Mammary epithelial cell (primary cell): ENCODE measurements at regions of chr17 and their contacts with region 1.

Region 1: DNA sequence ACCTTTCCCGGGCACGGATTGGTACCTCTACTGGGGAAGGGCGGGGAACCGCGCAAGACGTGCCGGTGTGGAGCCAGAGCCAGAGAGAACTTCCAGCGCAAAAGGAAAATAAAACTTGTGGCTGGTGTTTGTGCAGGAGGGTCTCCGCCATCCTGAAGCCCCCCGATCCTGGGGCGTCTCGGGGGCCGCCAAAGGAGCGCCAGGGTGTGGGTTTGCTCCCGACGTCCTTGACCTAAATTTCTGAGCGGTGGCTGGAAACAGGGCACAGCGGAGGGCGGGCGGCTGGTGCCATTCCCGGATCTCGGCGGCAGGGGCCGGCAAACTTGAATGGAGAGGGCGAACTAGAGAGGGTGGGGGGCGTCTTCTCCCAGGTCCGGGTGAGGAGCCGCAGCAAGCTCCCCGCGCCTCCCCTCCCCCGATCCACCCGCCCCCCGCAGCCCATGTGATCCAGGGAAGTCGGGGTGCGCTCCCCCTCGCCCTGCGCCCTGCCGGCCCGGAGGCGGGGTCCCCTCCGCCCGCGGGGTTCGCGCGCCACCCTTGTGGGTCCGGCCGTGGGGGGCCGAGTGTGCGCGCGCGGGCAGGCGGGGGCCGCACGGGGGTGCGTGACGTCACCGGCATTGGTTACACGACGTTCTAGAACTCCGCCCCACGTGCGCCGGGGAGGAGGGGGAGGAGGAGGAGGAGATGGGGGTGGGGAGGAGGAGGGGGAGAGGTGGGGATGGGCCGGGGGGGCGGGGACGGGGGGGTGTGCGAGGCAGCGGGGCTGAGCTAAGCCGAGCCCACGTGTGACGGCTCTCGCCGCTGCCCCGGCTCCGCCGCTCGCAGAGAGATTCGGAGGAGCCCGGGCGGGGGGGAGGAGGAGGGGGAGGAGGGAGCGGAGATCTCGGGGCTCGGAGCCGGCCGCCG is at the start of gene MSI2:
- DNase-seq: peak; percentile 76
- H3K4me3 ChIP-seq: peak within 1 kb of the TSS; percentile 65 to 99 (median 68)
- H3K27ac ChIP-seq: peak within 1 kb of the TSS; percentile 61
- H3K4me1 ChIP-seq: peaks cover 18% of the 10 kb centered on the region
- H3K27me3 ChIP-seq: no peaks in the 10 kb centered on the region
- CTCF ChIP-seq: no peak
- total RNA-seq, gene MSI2: 56.5 to 57.0 TPM

Region 2: GRCh38 chr17:56891784-56892183 is 364.2 kb before region 1 on chr17:
- CTCF ChIA-PET with region 1: no interaction called
- dilution Hi-C with region 1: no loop called
- in situ Hi-C with region 1: no loop called
- intact Hi-C with region 1: no loop called
- DNase-seq: no peak
- H3K4me3 ChIP-seq: no peak overlapping the region
- H3K27ac ChIP-seq: no peak overlapping the region
- H3K4me1 ChIP-seq: no peaks in the 10 kb centered on the region
- H3K27me3 ChIP-seq: no peaks in the 10 kb centered on the region
- CTCF ChIP-seq: peak; percentile 14 to 32

Region 3: DNA sequence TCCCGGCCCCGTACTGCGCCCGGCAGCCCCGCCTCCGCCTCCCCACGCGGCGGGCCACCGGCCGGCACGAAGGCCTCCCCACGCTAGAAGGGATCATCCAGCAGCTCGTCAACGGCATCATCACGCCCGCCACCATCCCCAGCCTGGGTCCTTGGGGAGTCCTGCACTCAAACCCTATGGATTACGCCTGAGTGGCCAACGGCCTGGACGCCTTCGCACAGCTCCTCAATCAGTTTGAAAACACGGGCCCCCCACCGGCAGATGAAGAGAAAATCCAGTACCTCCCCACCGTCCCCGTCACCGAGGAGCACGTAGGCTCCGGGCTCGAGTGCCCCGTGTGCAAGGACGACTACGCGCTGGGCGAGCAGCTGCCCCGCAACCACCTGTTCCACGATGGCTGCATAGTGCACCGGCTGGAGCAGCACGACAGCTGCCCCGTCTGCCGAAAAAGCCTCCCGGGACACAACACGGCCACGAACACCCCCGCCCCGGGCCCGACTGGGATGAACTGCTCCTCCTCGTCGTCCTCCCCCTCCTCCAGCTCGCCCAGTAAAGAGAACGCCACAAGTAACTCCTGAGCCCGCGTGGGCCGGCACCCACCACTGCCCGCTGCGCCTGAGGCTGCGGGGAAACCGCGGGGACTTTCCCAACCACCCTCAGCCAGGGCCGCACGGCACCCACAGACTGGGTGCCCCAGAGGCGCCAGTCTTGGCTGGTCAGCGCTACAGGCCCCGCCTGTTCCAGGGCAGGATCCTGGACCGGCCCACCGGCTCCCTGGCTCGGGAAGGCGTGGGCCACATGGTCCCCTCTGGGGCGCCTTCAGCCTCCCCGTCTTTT is 209.9 kb before region 1 on chr17:
- CTCF ChIA-PET with region 1: no interaction called
- dilution Hi-C with region 1: no loop called
- in situ Hi-C with region 1: no loop called
- intact Hi-C with region 1: no loop called
- DNase-seq: peak; percentile 30
- H3K4me3 ChIP-seq: no peak overlapping the region
- H3K27ac ChIP-seq: no peak overlapping the region
- H3K4me1 ChIP-seq: peaks cover 4% of the 10 kb centered on the region
- H3K27me3 ChIP-seq: no peaks in the 10 kb centered on the region
- CTCF ChIP-seq: no peak

Region 4: DNA sequence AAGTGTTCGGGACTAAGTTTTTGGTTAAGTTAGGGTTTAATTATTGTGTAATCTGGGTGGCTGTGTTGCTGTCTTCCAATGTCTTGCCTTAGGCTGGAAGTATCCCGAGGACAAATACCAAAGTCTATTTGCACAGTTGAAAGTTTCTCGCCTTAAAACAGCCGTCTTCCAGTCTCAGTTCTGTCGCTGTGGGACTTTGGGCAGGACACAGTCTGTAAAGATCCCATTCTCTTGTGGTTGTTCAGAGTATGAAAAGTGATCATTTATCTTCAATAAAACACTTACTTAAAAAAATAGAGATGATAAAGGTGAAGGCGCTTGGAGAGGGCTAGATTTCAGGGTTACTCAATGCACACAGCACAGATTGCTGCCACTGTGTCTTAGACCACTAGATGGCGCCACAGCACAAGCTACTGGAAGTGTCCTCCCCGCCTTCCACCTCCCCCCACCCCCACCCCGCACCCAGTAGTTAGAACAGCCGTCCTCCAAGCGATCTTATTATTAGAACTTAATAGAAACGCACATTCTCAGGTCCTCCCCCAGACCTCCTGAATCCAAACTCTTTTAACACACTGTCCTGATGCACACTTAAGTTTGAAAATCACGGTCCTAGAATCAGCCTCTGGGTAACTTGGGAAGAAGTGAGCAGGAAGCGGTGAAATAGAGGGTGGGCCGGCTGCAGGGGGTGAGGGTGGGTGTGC is 125.1 kb before region 1 on chr17:
- CTCF ChIA-PET with region 1: no interaction called
- dilution Hi-C with region 1: no loop called
- in situ Hi-C with region 1: no loop called
- intact Hi-C with region 1: no loop called
- DNase-seq: peak; percentile 57
- H3K4me3 ChIP-seq: peak overlapping the region in 1 of 3 experiments; percentile 37
- H3K27ac ChIP-seq: no peak overlapping the region
- H3K4me1 ChIP-seq: peaks cover 4% of the 10 kb centered on the region
- H3K27me3 ChIP-seq: no peaks in the 10 kb centered on the region
- CTCF ChIP-seq: peak; percentile 77 to 83

Region 5: GRCh38 chr17:57293077-57293476 is 37.0 kb after region 1 on chr17:
- CTCF ChIA-PET with region 1: no interaction called
- dilution Hi-C with region 1: no loop called
- in situ Hi-C with region 1: no loop called
- intact Hi-C with region 1: loop called (anchors 2 kb)
- DNase-seq: peak; percentile 92
- H3K4me3 ChIP-seq: no peak overlapping the region
- H3K27ac ChIP-seq: peak overlapping the region; percentile 23
- H3K4me1 ChIP-seq: peaks cover 36% of the 10 kb centered on the region
- H3K27me3 ChIP-seq: no peaks in the 10 kb centered on the region
- CTCF ChIP-seq: no peak

Region 6: DNA sequence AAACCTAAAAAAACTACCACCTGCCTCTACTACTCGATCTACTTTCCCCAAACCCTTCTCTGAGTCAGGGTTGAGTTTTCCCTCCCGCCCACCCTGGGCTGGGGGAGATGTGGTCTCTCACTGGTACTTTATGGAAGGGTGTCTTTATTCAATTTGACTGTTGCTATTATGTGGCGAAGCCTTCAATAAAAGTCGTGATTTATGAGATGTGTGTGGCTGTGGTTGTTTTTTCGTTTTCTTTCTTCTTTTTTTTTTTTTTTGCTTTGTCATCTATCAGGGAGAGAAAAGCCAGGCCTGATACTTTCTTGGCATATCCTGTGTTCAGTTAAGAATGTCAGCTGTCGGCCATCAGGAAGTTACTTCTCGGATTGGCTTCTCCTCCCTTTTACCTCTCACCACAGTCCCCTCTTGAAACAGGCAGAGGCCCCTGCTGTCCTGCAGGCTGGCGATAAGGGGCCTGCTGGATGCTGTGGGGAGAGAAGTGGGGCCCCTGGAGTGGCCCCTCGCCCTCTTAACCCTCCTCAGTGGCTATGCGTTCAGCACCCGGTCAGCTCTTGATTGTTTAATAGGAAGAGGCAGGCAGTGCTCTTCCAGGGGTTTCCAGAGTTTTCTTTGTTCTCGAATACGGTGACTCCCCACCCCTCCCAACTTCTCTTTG is 123.3 kb after region 1 on chr17:
- CTCF ChIA-PET with region 1: no interaction called
- dilution Hi-C with region 1: no loop called
- in situ Hi-C with region 1: no loop called
- intact Hi-C with region 1: loop called (anchors 5 kb)
- DNase-seq: no peak
- H3K4me3 ChIP-seq: no peak overlapping the region
- H3K27ac ChIP-seq: no peak overlapping the region
- H3K4me1 ChIP-seq: peaks cover 22% of the 10 kb centered on the region
- H3K27me3 ChIP-seq: no peaks in the 10 kb centered on the region
- CTCF ChIP-seq: no peak

Region 7: DNA sequence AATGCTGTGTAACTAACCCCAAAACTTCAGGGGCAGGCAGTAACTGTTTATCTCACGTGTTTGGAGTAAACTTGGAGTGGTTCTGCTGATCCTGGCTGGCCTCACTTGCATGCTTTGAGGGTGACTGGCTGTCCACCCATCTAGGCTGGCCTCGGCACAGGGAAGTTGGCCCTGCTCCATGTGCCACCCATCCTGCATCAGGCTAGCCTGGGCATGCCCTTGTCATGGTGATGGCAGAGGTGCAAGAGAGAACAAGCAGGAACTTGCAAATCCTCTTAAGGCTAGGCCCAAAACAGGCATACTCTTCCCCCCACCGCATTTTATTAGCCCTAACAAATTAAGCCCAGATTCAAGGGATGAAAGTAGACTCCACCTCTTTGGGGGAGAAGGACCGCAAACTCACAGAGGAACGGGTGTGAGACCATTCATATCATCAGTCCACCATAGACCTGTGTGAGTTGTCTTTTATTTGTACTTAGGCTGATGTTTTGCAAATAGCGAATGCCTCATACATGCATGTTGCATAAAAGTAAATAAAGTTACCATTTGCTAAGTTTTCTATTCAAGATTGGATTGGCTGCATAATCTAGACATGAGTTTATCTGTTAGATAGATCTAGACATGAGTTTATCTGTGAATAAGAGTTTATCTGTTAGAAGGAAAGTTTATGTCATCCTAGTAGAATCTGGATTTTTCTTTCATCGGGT is 268.1 kb after region 1 on chr17:
- CTCF ChIA-PET with region 1: no interaction called
- dilution Hi-C with region 1: no loop called
- in situ Hi-C with region 1: loop called in 1 of 2 experiments (anchors 25 kb)
- intact Hi-C with region 1: loop called (anchors 10 kb)
- DNase-seq: peak; percentile 96
- H3K4me3 ChIP-seq: no peak overlapping the region
- H3K27ac ChIP-seq: peak overlapping the region; percentile 72
- H3K4me1 ChIP-seq: peaks cover 25% of the 10 kb centered on the region
- H3K27me3 ChIP-seq: no peaks in the 10 kb centered on the region
- CTCF ChIP-seq: no peak

Region 8: GRCh38 chr17:57557834-57558681 is 302.0 kb after region 1 on chr17:
- CTCF ChIA-PET with region 1: interaction called, 3 read pairs
- dilution Hi-C with region 1: no loop called
- in situ Hi-C with region 1: no loop called
- intact Hi-C with region 1: loop called (anchors 1 kb)
- DNase-seq: peak; percentile 74
- H3K4me3 ChIP-seq: no peak overlapping the region
- H3K27ac ChIP-seq: no peak overlapping the region
- H3K4me1 ChIP-seq: peaks cover 12% of the 10 kb centered on the region
- H3K27me3 ChIP-seq: no peaks in the 10 kb centered on the region
- CTCF ChIP-seq: no peak

Region 9: DNA sequence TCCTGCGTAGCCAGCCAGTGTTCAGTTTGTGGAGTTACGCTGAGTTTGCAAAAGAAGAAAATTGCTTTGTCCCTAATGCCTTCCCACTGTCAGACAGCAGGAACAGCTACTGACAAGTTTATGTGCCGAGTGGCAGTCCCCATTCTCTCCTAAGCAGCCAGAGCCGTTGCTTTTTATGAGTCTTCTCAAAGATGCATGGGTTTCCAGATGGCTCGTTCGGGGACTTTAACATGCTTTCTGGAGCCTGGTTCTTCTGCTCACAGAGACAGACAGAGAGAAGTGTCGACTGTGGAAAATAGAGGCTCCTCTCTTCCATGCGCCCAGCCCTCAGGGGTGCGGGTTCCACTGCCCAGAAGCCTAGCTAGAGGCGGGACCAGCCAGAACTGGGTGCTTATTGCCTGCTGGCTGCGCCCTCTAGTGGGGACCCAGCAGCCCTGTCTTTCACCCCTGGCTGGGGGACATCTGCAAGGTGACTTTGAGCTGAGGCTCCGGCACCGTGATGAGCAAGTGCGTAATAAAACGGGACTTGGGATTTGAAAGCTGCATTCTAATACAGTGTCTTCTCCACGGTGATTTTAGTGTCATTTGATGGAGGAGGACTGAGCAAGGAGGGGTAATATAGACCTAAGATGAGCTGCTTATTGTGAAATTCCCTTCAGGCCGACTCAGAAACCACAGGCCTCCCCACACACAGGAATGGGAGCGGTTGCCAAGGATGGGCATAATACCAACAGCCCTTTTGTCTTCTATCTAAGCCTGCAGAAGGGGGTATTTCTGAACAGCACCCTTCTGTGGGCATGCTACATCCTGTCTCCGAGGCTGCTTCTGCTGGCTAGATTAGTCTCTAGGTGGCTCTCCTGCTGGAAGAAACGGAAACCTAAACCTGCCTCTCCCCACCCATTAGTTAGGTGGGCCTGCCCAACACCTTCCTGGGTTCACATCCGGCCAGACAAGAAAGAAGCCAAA is 415.9 kb after region 1 on chr17:
- CTCF ChIA-PET with region 1: interaction called, 3 read pairs
- dilution Hi-C with region 1: no loop called
- in situ Hi-C with region 1: no loop called
- intact Hi-C with region 1: loop called (anchors 5 kb)
- DNase-seq: peak; percentile 93
- H3K4me3 ChIP-seq: no peak overlapping the region
- H3K27ac ChIP-seq: peak overlapping the region; percentile 71
- H3K4me1 ChIP-seq: peaks cover 25% of the 10 kb centered on the region
- H3K27me3 ChIP-seq: no peaks in the 10 kb centered on the region
- CTCF ChIP-seq: peak; percentile 95